ENCODE measurements at regions of chr14 and their contacts with region 1.

Region 1: DNA sequence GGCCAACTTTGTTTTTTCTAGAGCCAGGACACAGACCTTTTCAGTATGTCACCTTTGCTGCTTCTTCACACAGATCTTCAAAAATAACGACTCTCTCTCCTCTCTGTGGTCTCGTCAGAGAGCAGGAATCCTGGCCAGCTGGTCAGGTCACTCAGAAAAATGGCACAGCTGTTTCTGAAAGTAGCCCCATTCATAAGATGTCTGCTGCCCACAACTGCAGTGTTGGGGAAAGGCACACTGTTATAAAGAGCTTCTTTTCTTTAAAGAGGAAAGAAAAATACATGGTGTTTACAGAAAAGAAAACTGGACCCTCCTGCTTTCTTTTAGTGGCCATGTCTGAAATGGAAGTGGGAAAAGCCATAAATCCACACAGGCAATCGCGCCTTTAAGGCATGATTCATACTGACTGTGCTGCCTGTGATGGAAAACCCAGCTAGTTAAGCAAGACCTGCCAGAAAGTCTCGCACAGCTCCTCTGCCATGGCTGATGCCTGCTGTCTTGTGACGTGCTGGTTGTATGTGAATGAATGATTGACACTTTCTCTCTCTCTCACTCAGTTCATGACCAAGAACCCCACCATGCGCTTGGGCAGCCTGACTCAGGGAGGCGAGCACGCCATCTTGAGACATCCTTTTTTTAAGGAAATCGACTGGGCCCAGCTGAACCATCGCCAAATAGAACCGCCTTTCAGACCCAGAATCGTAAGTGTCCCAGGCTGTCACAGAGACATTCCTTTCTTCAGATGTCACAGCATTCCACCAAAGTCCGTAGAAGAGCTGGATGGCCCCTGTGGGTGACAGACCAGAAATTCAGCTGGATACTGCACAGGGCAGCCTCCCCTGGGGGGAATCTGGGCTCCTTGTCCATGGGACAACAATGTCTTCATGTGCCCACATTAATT is 147.9 kb upstream of the HIF1A start:
- DNase-seq: no peak
- H3K4me3 ChIP-seq: no peak overlapping the region
- H3K27ac ChIP-seq: peak overlapping the region in 19 of 59 donors; percentile 2 to 84 (median 53)
- H3K27me3 ChIP-seq: no peaks in the 10 kb centered on the region
- CTCF ChIP-seq: no peak

Region 2: GRCh38 chr14:61308198-61308597 is 239.2 kb before region 1 on chr14:
- intact Hi-C with region 1: no loop called
- DNase-seq: no peak
- H3K4me3 ChIP-seq: no peak overlapping the region
- H3K27ac ChIP-seq: no peak overlapping the region
- H3K27me3 ChIP-seq: no peaks in the 10 kb centered on the region
- CTCF ChIP-seq: no peak

Region 3: DNA sequence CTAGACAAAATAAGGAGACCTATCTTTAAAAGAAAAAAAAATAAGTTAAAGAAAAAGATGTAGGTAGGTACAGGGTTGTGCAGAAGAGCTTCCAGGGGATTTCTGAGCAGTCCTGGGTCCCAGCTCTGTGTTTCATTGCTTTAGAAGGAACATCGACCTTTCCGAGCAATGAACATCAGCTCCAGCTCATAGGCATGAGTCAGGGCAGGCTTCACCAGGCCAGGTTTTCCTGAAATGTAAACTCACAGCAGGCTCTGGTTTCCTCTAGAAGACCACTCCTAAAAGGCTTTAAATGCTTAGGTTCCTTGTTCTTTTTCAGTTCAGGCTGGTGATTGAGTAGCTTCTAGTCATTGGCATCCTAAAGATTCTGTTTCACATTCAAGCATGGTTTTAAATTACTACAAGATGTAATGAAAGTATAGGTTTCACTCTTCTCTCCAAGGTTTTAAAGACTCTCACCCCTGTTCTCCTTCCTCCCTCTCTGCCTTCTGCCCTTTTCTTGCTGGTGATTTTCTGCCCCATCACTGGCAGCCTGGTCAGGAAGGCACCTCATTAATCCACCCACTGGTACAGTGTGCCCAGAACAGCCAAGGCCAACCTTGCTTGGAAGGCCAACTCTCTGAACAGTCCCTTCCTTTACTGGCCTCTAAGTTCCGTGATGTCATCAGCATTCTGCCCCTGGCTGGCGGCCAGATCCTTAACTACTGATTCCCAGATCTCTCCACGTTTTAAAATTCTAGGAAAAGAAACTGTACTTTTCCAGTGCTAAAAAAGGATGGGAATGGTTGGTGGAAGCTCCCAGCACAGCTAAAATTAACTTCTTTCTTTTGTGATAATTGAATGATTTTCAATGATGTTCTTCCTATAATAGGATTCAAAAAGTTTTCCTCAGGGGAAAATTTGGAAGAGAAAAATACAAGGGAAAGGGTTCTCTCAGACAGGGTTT is 38.4 kb after region 1 on chr14:
- intact Hi-C with region 1: no loop called
- DNase-seq: peak in 4 of 10 donors; percentile 31 to 53 (median 46)
- H3K4me3 ChIP-seq: no peak overlapping the region
- H3K27ac ChIP-seq: peak overlapping the region in 49 of 59 donors; percentile 3 to 89 (median 50)
- H3K27me3 ChIP-seq: no peaks in the 10 kb centered on the region
- CTCF ChIP-seq: no peak

Region 4: DNA sequence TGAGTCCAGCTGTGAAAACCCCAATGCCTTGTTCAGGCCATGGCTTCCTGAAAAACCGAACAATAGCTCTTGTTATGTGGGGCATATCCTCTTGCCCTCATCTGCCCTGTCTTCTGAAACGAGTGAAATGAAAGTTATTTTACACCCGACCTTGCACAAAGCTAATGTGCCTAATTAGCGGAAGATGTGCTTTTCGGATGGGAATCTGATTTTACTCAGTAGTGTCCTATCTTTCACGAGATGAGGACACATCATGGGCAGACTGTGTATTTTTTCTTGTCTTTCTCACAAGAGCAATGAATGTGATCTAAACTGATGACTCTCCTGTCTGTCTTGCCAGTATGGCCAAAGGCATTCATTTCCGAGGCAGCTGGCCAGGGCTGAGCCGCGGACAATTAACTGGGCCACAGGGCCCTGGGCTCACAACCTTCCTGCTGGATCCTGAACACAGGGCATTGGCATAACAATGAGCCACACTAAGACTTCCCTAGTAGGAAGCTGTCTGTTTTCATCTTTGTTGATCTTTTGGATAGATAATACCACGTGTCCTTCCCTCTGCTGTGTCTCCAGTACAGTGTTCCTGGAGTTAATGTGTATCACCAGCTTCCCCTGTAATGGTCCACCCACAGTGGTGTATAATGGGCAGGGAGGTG is 61.9 kb after region 1 on chr14:
- intact Hi-C with region 1: loop called in 1 of 2 experiments (anchors 10 kb)
- DNase-seq: peak in 7 of 10 donors; percentile 34 to 70 (median 51)
- H3K4me3 ChIP-seq: peak overlapping the region in 40 of 59 donors; percentile 2 to 52 (median 26)
- H3K27ac ChIP-seq: peak overlapping the region in 51 of 59 donors; percentile 0 to 79 (median 58)
- H3K27me3 ChIP-seq: no peaks in the 10 kb centered on the region
- CTCF ChIP-seq: no peak

Region 5: GRCh38 chr14:61662437-61663311 is 115.2 kb after region 1 on chr14:
- intact Hi-C with region 1: no loop called
- DNase-seq: no peak
- H3K4me3 ChIP-seq: no peak overlapping the region
- H3K27ac ChIP-seq: no peak overlapping the region
- H3K27me3 ChIP-seq: peaks cover 0 to 4% (median 0%) of the 10 kb centered on the region in 45 donors
- CTCF ChIP-seq: no peak